Activated CD8-positive, alpha-beta T cell treated with anti-CD3 and anti-CD28 coated beads for 36 hours (primary cell): ENCODE measurements at regions of chr3 and their contacts with region 1.

Region 1: GRCh38 chr3:183654729-183655128 is 19.3 kb downstream of the KLHL24 start:
- DNase-seq: no peak
- ATAC-seq: no peak
- H3K4me3 Mint-ChIP-seq: no peak overlapping the region
- H3K27ac Mint-ChIP-seq: peak overlapping the region; percentile 7
- H3K4me1 Mint-ChIP-seq: peaks cover 12% of the 10 kb centered on the region
- H3K27me3 Mint-ChIP-seq: no peaks in the 10 kb centered on the region
- CTCF ChIP-seq: no peak

Region 2: DNA sequence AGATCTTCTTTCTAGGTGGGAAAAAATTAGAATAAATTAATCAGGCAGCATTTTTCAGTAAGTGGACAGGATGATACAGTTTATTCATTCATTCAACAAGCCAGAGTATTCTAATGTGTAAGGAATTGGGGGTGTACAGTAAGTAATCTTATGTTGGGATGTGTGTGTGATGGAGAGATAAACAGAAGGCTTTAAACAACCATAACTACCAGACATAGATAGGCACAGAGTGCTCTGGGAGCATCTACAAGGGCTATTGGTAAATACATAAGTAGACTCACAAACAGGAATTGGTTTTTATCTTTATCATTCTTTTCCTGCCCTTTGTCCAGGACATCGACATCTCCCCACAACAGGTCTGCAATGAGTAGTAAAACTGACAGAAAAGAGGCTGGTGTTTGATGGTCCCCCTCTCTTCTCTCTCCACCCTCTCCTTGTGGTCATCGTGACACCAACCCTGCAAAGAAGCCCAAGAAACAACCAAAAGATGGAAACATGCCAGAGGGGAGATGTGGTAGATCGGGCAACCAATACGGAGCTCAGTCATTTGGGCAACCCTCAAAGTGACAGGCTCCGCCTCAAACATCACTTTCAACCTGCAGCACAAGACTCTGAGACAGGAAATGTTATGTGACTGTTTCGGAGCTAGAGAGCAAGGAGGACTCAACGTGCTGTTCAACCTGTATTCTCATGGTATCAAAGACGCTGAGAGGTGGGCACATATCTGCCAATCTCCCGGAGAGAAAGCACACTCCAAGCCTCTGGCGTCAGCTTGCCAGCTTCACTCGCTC is 430.4 kb before region 1 on chr3:
- CTCF ChIA-PET with region 1: no interaction called
- POLR2A ChIA-PET with region 1: no interaction called
- intact Hi-C with region 1: no loop called
- DNase-seq: peak; percentile 74
- ATAC-seq: peak; percentile 93
- H3K4me3 Mint-ChIP-seq: peak overlapping the region; percentile 39
- H3K27ac Mint-ChIP-seq: peak overlapping the region; percentile 70
- H3K4me1 Mint-ChIP-seq: peaks cover 37% of the 10 kb centered on the region
- H3K27me3 Mint-ChIP-seq: no peaks in the 10 kb centered on the region
- CTCF ChIP-seq: no peak

Region 3: DNA sequence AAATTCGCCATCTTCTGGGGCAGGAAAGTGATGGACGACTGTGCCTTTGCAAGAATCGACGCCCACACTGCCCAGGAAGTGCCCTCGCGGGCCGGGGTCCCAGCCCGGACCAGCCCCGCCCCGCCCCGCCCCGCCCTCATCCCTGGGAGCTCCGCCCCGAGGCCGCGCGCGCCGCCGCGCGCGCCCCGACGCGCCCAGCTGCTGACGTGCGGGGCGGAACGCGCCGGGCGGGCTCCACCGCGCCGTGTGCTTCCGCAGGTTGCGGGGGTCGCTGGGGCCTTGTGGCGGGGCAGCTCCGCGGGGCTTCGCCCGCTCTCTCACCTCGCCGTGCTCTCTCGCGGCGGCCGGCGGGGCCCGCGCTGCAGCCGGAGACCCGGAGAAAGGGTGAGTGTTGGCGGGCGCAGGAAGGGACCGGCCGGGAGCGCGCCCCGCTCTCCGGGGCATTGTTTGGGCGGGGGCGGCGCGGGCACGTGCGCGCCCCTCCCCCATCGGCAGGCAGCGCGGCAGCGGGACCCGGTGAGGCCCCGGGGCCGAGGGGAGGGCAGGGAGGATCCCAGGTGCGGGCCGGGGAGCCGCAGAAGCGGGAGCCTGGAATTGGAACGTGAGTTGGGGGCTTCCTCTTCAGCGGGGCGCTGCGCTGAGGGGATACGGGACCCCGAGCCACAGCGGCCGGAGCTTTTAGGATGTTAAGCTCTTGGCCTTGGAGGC is 43.0 kb after region 1 on chr3 and contains the start of gene YEATS2:
- CTCF ChIA-PET with region 1: no interaction called
- POLR2A ChIA-PET with region 1: no interaction called
- intact Hi-C with region 1: loop called (anchors 5 kb)
- DNase-seq: peak; percentile 89
- ATAC-seq: peak; percentile 85
- H3K4me3 Mint-ChIP-seq: peak within 1 kb of the TSS; percentile 93
- H3K27ac Mint-ChIP-seq: peak within 1 kb of the TSS; percentile 92
- H3K4me1 Mint-ChIP-seq: peaks cover 31% of the 10 kb centered on the region
- H3K27me3 Mint-ChIP-seq: no peaks in the 10 kb centered on the region
- CTCF ChIP-seq: no peak
- total RNA-seq, gene YEATS2: 65.0 to 67.7 TPM